ENCODE measurements at regions of chr5 and their contacts with region 1.

Region 1: DNA sequence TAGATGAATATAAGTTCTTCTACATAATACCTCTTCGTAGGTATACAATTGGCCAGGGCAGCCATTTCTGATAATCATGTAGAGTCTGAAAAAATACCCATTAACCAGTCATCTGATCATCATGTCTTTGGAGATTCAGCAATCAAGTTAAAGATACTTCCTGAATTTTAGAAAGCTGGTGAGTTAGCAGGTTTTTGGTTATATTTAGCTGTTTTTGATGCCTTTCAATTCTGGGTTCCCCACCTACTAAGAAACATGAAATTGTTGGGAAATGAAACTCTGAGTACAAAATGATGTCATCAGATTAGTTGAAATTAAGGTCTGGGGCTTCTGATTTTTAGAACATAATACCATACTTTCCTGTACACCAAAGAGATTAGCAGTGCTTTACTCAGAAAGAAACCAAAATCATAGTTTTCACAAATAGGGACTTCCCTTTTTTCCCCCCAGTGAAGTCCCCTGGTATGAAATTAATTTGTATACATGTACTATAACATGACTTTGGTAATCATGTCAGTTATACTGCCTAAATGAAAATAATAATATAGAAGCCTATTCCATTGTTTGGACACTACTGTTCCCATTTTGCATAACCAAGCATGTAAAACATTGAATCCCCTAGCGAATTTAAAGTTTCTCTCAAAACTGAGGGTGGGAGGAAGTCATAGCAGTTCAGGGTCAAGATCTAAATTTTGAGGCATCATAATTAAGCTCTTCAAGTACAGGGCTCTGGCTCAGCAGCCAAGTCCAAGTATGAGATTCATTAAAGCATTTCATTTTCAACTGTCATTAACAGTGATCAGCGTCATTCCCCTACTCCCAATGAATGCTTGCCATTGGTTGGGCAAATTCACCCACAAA is 17.9 kb downstream of the PRLR start:
- DNase-seq: peak; percentile 71
- ATAC-seq: peak; percentile 85
- H3K4me3 ChIP-seq: no peak overlapping the region
- H3K27ac ChIP-seq: peak overlapping the region; percentile 22; the same call in 1 of the 2 replicates
- H3K4me1 ChIP-seq: peaks cover 12% of the 10 kb centered on the region; the same call in 1 of the 2 replicates
- H3K27me3 ChIP-seq: no peaks in the 10 kb centered on the region
- CTCF ChIP-seq: no peak
- EP300 ChIP-seq: peak; percentile 61 to 71; a peak in 2 of 4 replicates
- POLR2A ChIP-seq: no peak
- RAD21 ChIP-seq: no peak

Region 2: GRCh38 chr5:35089334-35090314 is 122.7 kb before region 1 on chr5:
- CTCF ChIA-PET with region 1: interaction called, 32 read pairs
- POLR2A ChIA-PET with region 1: no interaction called
- RAD21 ChIA-PET with region 1: interaction called, 10 read pairs
- SMC1A ChIA-PET with region 1: interaction called, 11 read pairs
- in situ Hi-C with region 1: no loop called
- intact Hi-C with region 1: loop called (anchors 1 kb)
- DNase-seq: peak; percentile 28
- ATAC-seq: peak; percentile 92
- H3K4me3 ChIP-seq: no peak overlapping the region
- H3K27ac ChIP-seq: no peak overlapping the region
- H3K4me1 ChIP-seq: no peaks in the 10 kb centered on the region
- H3K27me3 ChIP-seq: no peaks in the 10 kb centered on the region
- CTCF ChIP-seq: peak; percentile 75 to 90 (median 78); a peak in 5 of 6 replicates
- EP300 ChIP-seq: no peak
- POLR2A ChIP-seq: no peak
- RAD21 ChIP-seq: peak; percentile 94

Region 3: DNA sequence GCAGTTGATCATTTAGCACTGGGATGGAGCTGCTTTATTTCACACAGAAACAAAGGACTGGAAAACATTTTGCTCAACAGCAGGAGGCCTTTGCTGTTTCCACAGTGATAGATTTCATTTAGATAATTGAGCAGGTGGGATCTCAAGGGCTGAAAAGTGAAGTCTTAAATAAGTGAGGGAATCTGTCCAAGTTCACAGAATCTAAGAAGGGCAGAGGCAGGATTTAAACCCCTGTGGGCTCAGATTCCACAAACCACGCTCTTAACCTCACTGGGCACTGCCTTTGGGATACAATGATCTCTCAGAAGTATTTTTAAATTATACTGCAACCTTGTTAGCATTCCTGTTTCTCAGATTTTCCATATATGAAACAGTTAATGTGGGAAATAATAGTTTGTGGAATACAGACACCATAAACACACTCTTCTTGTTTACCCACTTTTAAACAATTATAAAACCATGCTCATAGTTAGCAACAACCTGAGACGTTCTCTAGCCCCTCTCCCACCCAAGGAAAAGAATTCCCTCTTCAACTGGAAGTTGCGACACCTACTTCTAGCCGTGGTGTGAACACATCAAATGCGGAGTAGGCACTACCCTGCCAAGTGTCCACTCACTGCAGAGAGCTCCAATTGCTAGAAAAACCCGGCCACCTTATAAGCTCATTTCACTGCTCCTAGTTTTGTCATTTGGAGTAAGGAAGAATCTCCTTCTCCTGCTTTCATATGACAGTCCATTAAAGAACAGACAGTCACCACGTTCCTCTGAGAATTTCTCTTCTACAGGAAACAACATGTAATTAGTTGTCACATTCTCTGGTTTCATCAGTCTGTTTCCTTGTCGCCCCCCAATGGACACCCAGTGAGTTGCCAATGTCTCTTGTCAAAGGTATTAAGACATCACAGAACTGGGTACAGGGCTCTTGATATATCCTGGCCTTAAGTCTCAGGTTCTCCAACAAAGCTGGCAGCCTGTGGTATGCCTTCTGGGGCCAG is 29.5 kb before region 1 on chr5:
- CTCF ChIA-PET with region 1: interaction called, 16 read pairs
- POLR2A ChIA-PET with region 1: no interaction called
- RAD21 ChIA-PET with region 1: interaction called, 7 read pairs
- SMC1A ChIA-PET with region 1: interaction called, 27 read pairs
- in situ Hi-C with region 1: no loop called
- intact Hi-C with region 1: no loop called
- DNase-seq: peak; percentile 27
- ATAC-seq: peak; percentile 91
- H3K4me3 ChIP-seq: no peak overlapping the region
- H3K27ac ChIP-seq: no peak overlapping the region
- H3K4me1 ChIP-seq: no peaks in the 10 kb centered on the region
- H3K27me3 ChIP-seq: no peaks in the 10 kb centered on the region
- CTCF ChIP-seq: peak; percentile 59 to 69 (median 63)
- EP300 ChIP-seq: no peak
- POLR2A ChIP-seq: no peak
- RAD21 ChIP-seq: peak; percentile 62

Region 4: DNA sequence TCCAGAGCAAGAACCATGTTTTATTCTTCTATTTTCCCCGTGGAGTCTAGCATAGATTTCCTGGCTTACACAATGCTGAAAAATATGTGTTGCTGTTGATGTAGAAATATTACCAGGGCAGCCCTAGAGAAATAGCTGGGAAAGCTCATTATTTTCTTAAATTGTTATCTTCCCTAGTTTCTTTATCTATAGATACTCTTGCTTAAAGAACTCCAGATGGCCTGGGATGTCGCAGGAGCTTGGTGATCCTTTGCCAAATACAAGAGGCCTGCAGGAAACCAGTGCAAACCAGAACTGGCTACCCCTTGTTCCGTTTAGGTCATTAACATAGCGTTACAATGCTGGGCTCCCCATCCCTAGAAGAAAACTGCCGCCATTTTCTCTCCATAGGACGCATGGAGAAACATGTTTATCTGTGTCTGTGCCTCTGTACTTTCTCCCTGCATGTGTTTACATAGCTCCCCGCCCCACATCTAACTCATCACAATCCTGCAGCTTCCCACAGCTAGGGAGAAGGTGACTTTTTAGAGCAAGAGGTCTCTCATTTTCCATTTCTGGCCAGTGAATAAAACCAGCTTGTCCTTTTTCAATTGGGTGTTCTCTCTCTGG is 11.5 kb after region 1 on chr5:
- CTCF ChIA-PET with region 1: interaction called, 104 read pairs
- POLR2A ChIA-PET with region 1: interaction called, 49 read pairs
- RAD21 ChIA-PET with region 1: interaction called, 108 read pairs
- SMC1A ChIA-PET with region 1: interaction called, 224 read pairs
- in situ Hi-C with region 1: no loop called
- intact Hi-C with region 1: loop called (anchors 2 kb)
- DNase-seq: no peak
- ATAC-seq: no peak
- H3K4me3 ChIP-seq: no peak overlapping the region
- H3K27ac ChIP-seq: no peak overlapping the region
- H3K4me1 ChIP-seq: no peaks in the 10 kb centered on the region
- H3K27me3 ChIP-seq: no peaks in the 10 kb centered on the region; a peak in 2 of 4 replicates
- CTCF ChIP-seq: no peak
- EP300 ChIP-seq: no peak
- POLR2A ChIP-seq: no peak
- RAD21 ChIP-seq: no peak

Region 5: DNA sequence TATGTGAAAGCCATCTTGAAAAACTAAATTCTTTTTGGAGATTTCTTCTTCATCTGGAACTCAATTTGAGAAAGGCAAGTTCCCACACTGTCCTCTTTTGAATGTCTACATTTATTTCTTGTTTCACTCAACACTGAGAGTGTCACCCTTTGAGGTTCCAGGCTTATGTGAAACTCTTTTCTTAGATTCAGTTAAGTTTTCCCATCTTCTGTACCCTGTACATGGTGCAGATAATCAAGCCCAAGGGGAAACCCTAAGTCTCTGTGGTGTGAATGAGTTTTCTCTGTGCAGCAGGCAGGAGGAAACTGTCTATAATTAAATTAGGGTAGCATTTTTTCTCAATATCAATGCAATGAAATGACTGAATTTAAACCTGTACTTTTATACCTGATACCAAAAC is 90.2 kb after region 1 on chr5:
- CTCF ChIA-PET with region 1: interaction called, 4 read pairs
- POLR2A ChIA-PET with region 1: no interaction called
- RAD21 ChIA-PET with region 1: interaction called, 5 read pairs
- SMC1A ChIA-PET with region 1: interaction called, 5 read pairs
- in situ Hi-C with region 1: no loop called
- intact Hi-C with region 1: loop called (anchors 1 kb)
- DNase-seq: peak; percentile 92
- ATAC-seq: peak; percentile 93
- H3K4me3 ChIP-seq: no peak overlapping the region
- H3K27ac ChIP-seq: peak overlapping the region; percentile 13; the same call in 1 of the 2 replicates
- H3K4me1 ChIP-seq: no peaks in the 10 kb centered on the region; the same call in 1 of the 2 replicates
- H3K27me3 ChIP-seq: no peaks in the 10 kb centered on the region
- CTCF ChIP-seq: no peak
- EP300 ChIP-seq: peak; percentile 66 to 69; a peak in 2 of 4 replicates
- POLR2A ChIP-seq: no peak
- RAD21 ChIP-seq: no peak